ENCODE measurements at regions of chr7 and their contacts with region 1.

Region 1: DNA sequence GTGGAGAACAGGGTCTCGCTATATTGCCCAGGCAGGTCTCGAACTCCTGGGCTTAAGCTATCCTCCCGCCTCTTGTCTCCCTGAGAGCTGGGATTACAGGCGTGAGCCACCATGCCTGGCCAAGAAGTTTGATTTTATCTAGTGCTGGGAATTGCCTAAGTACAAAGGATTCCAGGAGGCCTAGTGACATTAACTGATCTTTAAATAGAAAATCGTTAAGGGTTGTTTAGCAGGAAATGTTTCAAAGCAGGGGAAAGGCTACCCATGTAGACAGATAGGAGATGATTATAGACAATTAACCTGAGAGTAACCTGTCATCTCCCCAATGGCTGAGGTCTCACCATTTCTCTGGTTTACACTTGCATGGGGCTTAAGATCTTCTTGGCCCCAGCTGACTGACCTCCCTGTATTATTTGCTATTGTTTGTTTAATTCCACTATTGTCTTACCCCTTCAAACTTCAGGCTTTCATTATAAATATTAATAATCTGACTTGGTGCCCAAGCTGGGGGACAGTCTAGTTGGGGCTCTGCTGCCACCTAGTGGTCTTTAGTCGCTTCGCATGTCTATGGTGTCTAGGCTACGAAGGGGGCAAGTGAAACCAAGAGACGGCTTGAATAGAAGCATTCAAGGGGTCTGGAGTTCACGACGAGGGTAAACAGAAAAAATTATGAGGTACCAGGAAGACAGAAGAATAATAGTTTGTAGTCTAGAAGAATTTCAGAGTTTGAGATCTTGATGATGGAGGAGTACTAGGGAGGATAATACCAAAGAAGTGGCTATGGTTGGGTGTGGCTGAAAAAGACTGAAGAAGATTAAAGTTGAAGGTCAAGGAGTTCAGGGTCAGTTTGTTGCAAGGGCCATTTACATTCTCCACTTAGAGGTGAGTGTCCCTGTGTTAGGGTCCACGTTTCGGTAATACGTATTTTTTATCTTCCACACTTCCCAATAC is 40.4 kb upstream of the BPGM start:
- DNase-seq: peak; percentile 51
- H3K4me3 ChIP-seq: peak overlapping the region; percentile 10
- H3K27ac ChIP-seq: no peak overlapping the region
- H3K4me1 ChIP-seq: peaks cover 11% of the 10 kb centered on the region
- H3K27me3 ChIP-seq: no peaks in the 10 kb centered on the region
- CTCF ChIP-seq: peak; percentile 97

Region 2: GRCh38 chr7:134432296-134433152 is 173.7 kb before region 1 on chr7:
- intact Hi-C with region 1: loop called (anchors 5 kb)
- DNase-seq: peak; percentile 85
- H3K4me3 ChIP-seq: peak overlapping the region; percentile 62
- H3K27ac ChIP-seq: peak overlapping the region; percentile 88
- H3K4me1 ChIP-seq: peaks cover 15% of the 10 kb centered on the region
- H3K27me3 ChIP-seq: no peaks in the 10 kb centered on the region
- CTCF ChIP-seq: peak; percentile 81

Measured in left ventricle myocardium inferior (tissue), 1 donor.